AG04449 (cell line): ENCODE measurements at regions of chr6 and their contacts with region 1.

Region 1: DNA sequence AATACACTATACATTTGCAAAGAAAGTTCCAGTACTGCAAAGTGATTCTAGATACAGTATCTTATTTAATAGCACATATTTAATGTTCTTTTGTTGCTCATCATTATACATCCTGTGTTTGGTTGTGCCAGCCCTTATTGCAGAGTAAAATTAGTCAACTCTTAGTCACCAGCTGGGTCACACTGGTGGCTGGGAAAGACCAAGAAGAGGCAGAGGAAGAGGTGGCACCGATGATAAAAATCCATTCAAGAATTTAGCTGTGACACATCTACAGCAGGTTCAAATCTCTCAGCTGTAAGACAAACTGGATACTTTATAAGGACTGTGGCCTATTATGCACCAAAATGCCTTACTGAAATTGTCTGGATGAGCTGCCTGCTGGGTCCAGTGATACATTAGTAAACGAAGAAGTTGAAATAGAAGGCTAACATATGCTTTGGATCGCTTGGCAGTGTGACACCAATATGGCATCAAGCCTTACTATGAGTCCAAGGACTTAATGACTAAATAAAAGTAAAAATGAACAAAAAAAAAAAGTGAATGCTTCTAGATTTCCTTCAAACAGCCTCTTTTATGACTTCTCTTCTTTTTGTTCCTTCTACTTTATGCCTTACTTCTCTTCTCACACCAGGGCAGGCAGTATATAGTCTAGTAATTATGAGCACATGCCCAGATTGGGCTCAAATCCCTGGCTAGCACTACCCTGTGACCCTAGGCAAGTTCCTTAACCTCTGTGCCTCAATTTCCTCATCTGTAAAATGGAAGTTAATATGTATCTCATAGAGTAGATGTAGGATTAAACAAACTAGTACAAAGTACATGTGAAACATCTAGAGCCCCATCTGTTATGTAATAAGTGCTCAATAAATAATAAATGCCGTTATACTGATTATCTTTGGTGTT is 29.4 kb upstream of the RNF8 start:
- DNase-seq: no peak
- H3K4me3 ChIP-seq: no peak overlapping the region
- CTCF ChIP-seq: no peak

Region 2: GRCh38 chr6:37339741-37340638 is 15.6 kb after region 1 on chr6:
- CTCF ChIA-PET with region 1: interaction called, 15 read pairs
- POLR2A ChIA-PET with region 1: no interaction called
- DNase-seq: no peak
- H3K4me3 ChIP-seq: no peak overlapping the region
- CTCF ChIP-seq: no peak

Region 3: DNA sequence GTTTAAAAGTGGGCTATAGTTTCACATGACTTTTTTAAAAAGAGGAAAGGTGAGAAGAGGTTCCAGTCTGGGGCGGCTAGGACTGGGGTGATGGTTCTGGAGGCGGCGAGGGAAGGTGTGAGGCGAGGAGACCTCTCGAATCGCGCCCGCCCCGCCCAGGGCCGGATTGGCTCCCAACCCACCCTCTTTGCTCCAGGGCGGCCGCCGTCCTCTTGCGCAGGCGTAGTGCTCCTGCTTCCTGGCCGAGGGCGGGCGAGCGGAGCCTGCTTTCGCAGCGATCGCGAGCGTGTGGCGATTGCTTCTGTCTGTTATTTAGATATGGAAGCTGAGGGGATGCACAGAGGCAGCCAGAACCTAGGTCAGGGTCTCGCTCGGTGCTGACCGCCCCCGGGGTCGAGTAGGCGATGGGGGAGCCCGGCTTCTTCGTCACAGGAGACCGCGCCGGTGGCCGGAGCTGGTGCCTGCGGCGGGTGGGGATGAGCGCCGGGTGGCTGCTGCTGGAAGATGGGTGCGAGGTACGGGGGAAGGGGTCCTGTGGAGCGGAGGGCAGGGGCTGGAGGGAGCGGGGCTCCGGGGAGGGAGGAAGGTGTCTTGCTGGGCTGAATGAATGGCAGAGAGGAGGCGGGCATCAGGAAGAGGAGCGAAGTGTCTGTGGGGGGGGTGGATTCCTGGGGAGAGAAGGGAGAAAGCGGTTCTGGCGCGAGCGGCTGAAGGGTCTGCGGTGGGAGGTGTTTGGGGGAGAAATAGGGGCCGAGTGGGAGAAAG is 29.6 kb after region 1 on chr6 and contains the start of gene RNF8:
- CTCF ChIA-PET with region 1: interaction called, 13 read pairs
- POLR2A ChIA-PET with region 1: no interaction called
- DNase-seq: no peak
- H3K4me3 ChIP-seq: peak within 1 kb of the TSS; percentile 94
- CTCF ChIP-seq: no peak